Activated CD8-positive, alpha-beta T cell treated with anti-CD3 and anti-CD28 coated beads for 36 hours (primary cell): ENCODE measurements at regions of chr17 and their contacts with region 1.

Region 1: DNA sequence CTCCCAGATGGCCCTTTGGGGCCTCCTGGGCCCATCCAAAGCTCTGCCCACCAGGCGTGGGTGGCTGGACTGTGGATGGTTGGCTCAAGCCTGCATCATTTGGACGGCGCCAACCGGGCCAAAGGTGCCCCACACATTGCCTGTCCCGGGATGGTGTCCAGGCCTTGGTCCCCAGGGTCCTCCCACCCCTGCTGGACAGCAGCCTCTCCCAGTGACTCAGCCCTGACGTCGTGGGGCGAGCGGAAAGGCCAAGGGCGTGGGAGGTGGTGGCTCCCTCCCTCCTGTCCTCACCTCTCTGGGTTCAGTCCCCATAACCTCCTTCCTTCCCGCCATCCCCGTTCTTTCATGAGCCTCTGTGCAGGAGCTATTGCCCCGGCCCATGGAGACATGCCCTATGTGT is 42.1 kb upstream of the DLX4 start:
- DNase-seq: no peak
- ATAC-seq: no peak
- H3K4me3 Mint-ChIP-seq: no peak overlapping the region
- H3K27ac Mint-ChIP-seq: no peak overlapping the region
- H3K4me1 Mint-ChIP-seq: no peaks in the 10 kb centered on the region
- H3K27me3 Mint-ChIP-seq: peaks cover 8% of the 10 kb centered on the region
- CTCF ChIP-seq: no peak

Region 2: GRCh38 chr17:49880291-49881053 is 46.4 kb before region 1 on chr17:
- CTCF ChIA-PET with region 1: interaction called, 10 read pairs
- POLR2A ChIA-PET with region 1: no interaction called
- intact Hi-C with region 1: no loop called
- DNase-seq: peak; percentile 82
- ATAC-seq: peak; percentile 100
- H3K4me3 Mint-ChIP-seq: peak overlapping the region; percentile 24
- H3K27ac Mint-ChIP-seq: no peak overlapping the region
- H3K4me1 Mint-ChIP-seq: peaks cover 3% of the 10 kb centered on the region
- H3K27me3 Mint-ChIP-seq: peaks cover 32% of the 10 kb centered on the region
- CTCF ChIP-seq: peak; percentile 99

Region 3: GRCh38 chr17:50015146-50015545 is 88.3 kb after region 1 on chr17:
- CTCF ChIA-PET with region 1: no interaction called
- POLR2A ChIA-PET with region 1: no interaction called
- intact Hi-C with region 1: no loop called
- DNase-seq: no peak
- ATAC-seq: no peak
- H3K4me3 Mint-ChIP-seq: no peak overlapping the region
- H3K27ac Mint-ChIP-seq: no peak overlapping the region
- H3K4me1 Mint-ChIP-seq: no peaks in the 10 kb centered on the region
- H3K27me3 Mint-ChIP-seq: peaks cover 18% of the 10 kb centered on the region
- CTCF ChIP-seq: no peak